K562 (cell line): ENCODE measurements at regions of chr6 and their contacts with region 1.

Region 1: GRCh38 chr6:10722820-10723566 is at the start of gene TMEM14C:
- DNase-seq: peak; percentile 97 to 99 (median 98)
- ATAC-seq: peak; percentile 97
- H3K4me3 ChIP-seq: peak within 1 kb of the TSS; percentile 64
- H3K27ac ChIP-seq: peak within 1 kb of the TSS; percentile 88
- H3K4me1 ChIP-seq: peaks cover 46 to 51% of the 10 kb centered on the region in 2 experiments
- H3K27me3 ChIP-seq: no peaks in the 10 kb centered on the region
- CTCF ChIP-seq: no peak
- EP300 ChIP-seq: no peak
- POLR2A ChIP-seq: peak; percentile 96
- RAD21 ChIP-seq: peak in 1 of 2 experiments; percentile 14; a peak in 1 of 4 replicates
- polyA plus RNA-seq, gene TMEM14C: 472 to 496 TPM

Region 2: GRCh38 chr6:10694302-10695085 is 28.5 kb before region 1 on chr6 and contains the starts of genes C6orf52 and PAK1IP1:
- CTCF ChIA-PET with region 1: no interaction called
- POLR2A ChIA-PET with region 1: interaction called, 4 read pairs
- in situ Hi-C with region 1: no loop called
- intact Hi-C with region 1: loop called (anchors 1 kb)
- DNase-seq: peak; percentile 94 to 97 (median 94)
- ATAC-seq: peak; percentile 98
- H3K4me3 ChIP-seq: peak within 1 kb of the TSS; percentile 55
- H3K27ac ChIP-seq: peak within 1 kb of the TSS; percentile 84
- H3K4me1 ChIP-seq: peaks cover 5 to 13% of the 10 kb centered on the region in 2 experiments; a peak in 4 of 5 replicates
- H3K27me3 ChIP-seq: no peaks in the 10 kb centered on the region
- CTCF ChIP-seq: 0 out of 6 replicates have a peak, but pooled peaks of 1 of the 3 experiments have one; percentile 1
- EP300 ChIP-seq: no peak; the same call in none of the 2 replicates
- POLR2A ChIP-seq: peak; percentile 98
- RAD21 ChIP-seq: peak; percentile 34 to 38; a peak in 3 of 4 replicates
- polyA plus RNA-seq, gene C6orf52: 27.6 to 37.0 TPM
- polyA plus RNA-seq, gene PAK1IP1: 189 to 200 TPM

Region 3: DNA sequence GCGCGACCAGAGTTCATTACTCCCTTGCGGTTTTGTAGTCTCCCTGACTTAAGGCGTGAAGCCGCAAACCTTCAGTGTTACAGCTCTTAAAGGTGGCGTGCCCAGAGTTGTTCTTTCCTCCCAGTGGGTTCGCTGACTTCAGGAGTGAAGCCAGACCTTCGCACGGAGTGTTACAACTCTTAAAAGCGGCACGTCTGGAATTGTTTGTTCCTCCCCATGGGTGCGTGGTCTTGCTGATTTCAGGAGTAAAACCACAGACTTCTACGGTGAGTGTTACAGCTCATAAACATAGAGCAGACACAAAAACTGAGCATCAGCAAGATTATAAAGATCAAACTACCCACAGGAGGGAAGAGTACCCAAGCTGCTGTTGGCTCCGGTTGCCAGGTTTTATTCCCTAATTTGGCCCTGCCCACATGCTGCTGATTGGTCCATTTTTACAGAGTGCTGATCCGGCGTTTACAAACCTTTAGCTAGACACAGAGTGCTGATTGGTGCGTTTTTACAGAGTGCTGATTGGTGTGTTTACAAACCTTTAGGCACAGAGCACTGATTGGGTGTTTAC is 10.2 kb after region 1 on chr6:
- CTCF ChIA-PET with region 1: no interaction called
- POLR2A ChIA-PET with region 1: interaction called, 48 read pairs
- in situ Hi-C with region 1: no loop called
- intact Hi-C with region 1: no loop called
- DNase-seq: no peak
- ATAC-seq: peak; percentile 55
- H3K4me3 ChIP-seq: no peak overlapping the region
- H3K27ac ChIP-seq: no peak overlapping the region
- H3K4me1 ChIP-seq: no peaks in the 10 kb centered on the region
- H3K27me3 ChIP-seq: no peaks in the 10 kb centered on the region
- CTCF ChIP-seq: no peak
- EP300 ChIP-seq: no peak
- POLR2A ChIP-seq: no peak
- RAD21 ChIP-seq: no peak

Region 4: DNA sequence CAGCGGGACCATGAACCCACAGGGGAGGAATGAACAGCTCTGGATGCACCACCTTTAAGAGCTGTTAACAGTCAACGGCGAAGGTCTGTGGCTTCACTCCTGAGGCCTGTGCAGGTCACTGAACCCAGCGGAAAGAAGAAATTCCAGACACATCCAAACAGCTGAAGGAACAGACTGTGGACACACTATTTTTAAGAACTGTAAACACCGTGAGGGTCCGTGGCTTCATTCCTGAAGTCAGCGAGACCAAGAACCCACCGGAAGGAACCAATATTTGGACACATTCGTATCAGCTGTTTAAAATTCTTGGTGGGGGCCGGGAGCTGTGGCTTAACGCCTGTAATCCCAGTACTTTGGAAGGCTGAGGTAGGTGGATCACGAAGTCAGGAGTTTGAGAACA is 19.3 kb after region 1 on chr6:
- CTCF ChIA-PET with region 1: no interaction called
- POLR2A ChIA-PET with region 1: interaction called, 48 read pairs
- in situ Hi-C with region 1: no loop called
- intact Hi-C with region 1: loop called (anchors 1 kb)
- DNase-seq: no peak
- ATAC-seq: no peak
- H3K4me3 ChIP-seq: no peak overlapping the region
- H3K27ac ChIP-seq: no peak overlapping the region
- H3K4me1 ChIP-seq: peaks cover 16 to 20% of the 10 kb centered on the region in 2 experiments
- H3K27me3 ChIP-seq: no peaks in the 10 kb centered on the region
- CTCF ChIP-seq: no peak
- EP300 ChIP-seq: no peak
- POLR2A ChIP-seq: no peak
- RAD21 ChIP-seq: no peak

Region 5: GRCh38 chr6:10747251-10747972 is 24.4 kb after region 1 on chr6 and contains the start of gene TMEM14B:
- CTCF ChIA-PET with region 1: interaction called, 3 read pairs
- POLR2A ChIA-PET with region 1: interaction called, 10 read pairs
- in situ Hi-C with region 1: no loop called
- intact Hi-C with region 1: loop called (anchors 1 kb)
- DNase-seq: peak; percentile 99 to 100 (median 100)
- ATAC-seq: peak; percentile 94
- H3K4me3 ChIP-seq: peak within 1 kb of the TSS; percentile 57
- H3K27ac ChIP-seq: peak within 1 kb of the TSS; percentile 75
- H3K4me1 ChIP-seq: peaks cover 28 to 51% of the 10 kb centered on the region in 2 experiments
- H3K27me3 ChIP-seq: no peaks in the 10 kb centered on the region
- CTCF ChIP-seq: no peak
- EP300 ChIP-seq: peak; percentile 33
- POLR2A ChIP-seq: peak; percentile 92
- RAD21 ChIP-seq: no peak; a peak in 1 of 4 replicates
- polyA plus RNA-seq, gene TMEM14B: 777 to 862 TPM

Region 6: GRCh38 chr6:10800829-10801535 is 78.0 kb after region 1 on chr6:
- CTCF ChIA-PET with region 1: no interaction called
- POLR2A ChIA-PET with region 1: no interaction called
- in situ Hi-C with region 1: no loop called
- intact Hi-C with region 1: loop called (anchors 2 kb)
- DNase-seq: peak; percentile 82 to 85 (median 84)
- ATAC-seq: peak; percentile 99
- H3K4me3 ChIP-seq: no peak overlapping the region
- H3K27ac ChIP-seq: no peak overlapping the region
- H3K4me1 ChIP-seq: no peaks in the 10 kb centered on the region; a peak in 1 of 5 replicates
- H3K27me3 ChIP-seq: no peaks in the 10 kb centered on the region
- CTCF ChIP-seq: peak; percentile 94 to 98 (median 97)
- EP300 ChIP-seq: no peak
- POLR2A ChIP-seq: no peak
- RAD21 ChIP-seq: peak; percentile 97 to 99

Region 7: GRCh38 chr6:10886691-10887535 is 163.9 kb after region 1 on chr6 and contains the start of gene SYCP2L:
- CTCF ChIA-PET with region 1: no interaction called
- POLR2A ChIA-PET with region 1: no interaction called
- in situ Hi-C with region 1: no loop called
- intact Hi-C with region 1: loop called (anchors 2 kb)
- DNase-seq: peak; percentile 78 to 95 (median 82)
- ATAC-seq: peak; percentile 93
- H3K4me3 ChIP-seq: peak within 1 kb of the TSS; percentile 79
- H3K27ac ChIP-seq: peak within 1 kb of the TSS; percentile 91
- H3K4me1 ChIP-seq: peaks cover 13 to 20% of the 10 kb centered on the region in 2 experiments
- H3K27me3 ChIP-seq: no peaks in the 10 kb centered on the region
- CTCF ChIP-seq: peak; percentile 74 to 89 (median 83)
- EP300 ChIP-seq: peak; percentile 55; the same call in 1 of the 2 replicates
- POLR2A ChIP-seq: peak; percentile 97
- RAD21 ChIP-seq: peak in 1 of 2 experiments; percentile 25; a peak in 1 of 4 replicates
- polyA plus RNA-seq, gene SYCP2L: 12.4 to 16.2 TPM

Region 8: GRCh38 chr6:11618533-11618932 is 895.5 kb after region 1 on chr6:
- CTCF ChIA-PET with region 1: no interaction called
- POLR2A ChIA-PET with region 1: no interaction called
- in situ Hi-C with region 1: no loop called
- intact Hi-C with region 1: no loop called
- DNase-seq: peak in 2 of 4 experiments; percentile 21 to 30
- ATAC-seq: peak; percentile 83
- H3K4me3 ChIP-seq: no peak overlapping the region
- H3K27ac ChIP-seq: no peak overlapping the region
- H3K4me1 ChIP-seq: no peaks in the 10 kb centered on the region
- H3K27me3 ChIP-seq: peaks cover 9 to 33% of the 10 kb centered on the region in 2 experiments
- CTCF ChIP-seq: peak; percentile 46 to 59 (median 49); a peak in 5 of 6 replicates
- EP300 ChIP-seq: no peak
- POLR2A ChIP-seq: no peak
- RAD21 ChIP-seq: peak; percentile 12 to 68; a peak in 2 of 4 replicates